CD14-positive monocyte (primary cell): ENCODE measurements at regions of chr20 and their contacts with region 1.

Region 1: GRCh38 chr20:653110-653589 is at the start of gene SRXN1:
- DNase-seq: peak; percentile 93 to 97 (median 93)
- H3K4me3 ChIP-seq: peak within 1 kb of the TSS; percentile 89 to 99 (median 94)
- H3K4me3 Mint-ChIP-seq: peak within 1 kb of the TSS; percentile 93 to 95
- H3K27ac ChIP-seq: peak within 1 kb of the TSS; percentile 62 to 96
- H3K27ac Mint-ChIP-seq: peak within 1 kb of the TSS; percentile 89 to 97 (median 94)
- H3K4me1 ChIP-seq: peaks cover 35 to 49% of the 10 kb centered on the region in 2 donors
- H3K4me1 Mint-ChIP-seq: peaks cover 53% of the 10 kb centered on the region
- H3K27me3 ChIP-seq: no peaks in the 10 kb centered on the region
- H3K27me3 Mint-ChIP-seq: peaks cover 0 to 2% (median 0%) of the 10 kb centered on the region in 3 donors
- CTCF ChIP-seq: peak; percentile 66
- polyA plus RNA-seq, gene SRXN1: 33.5 to 62.4 (median 56.6) TPM

Region 2: DNA sequence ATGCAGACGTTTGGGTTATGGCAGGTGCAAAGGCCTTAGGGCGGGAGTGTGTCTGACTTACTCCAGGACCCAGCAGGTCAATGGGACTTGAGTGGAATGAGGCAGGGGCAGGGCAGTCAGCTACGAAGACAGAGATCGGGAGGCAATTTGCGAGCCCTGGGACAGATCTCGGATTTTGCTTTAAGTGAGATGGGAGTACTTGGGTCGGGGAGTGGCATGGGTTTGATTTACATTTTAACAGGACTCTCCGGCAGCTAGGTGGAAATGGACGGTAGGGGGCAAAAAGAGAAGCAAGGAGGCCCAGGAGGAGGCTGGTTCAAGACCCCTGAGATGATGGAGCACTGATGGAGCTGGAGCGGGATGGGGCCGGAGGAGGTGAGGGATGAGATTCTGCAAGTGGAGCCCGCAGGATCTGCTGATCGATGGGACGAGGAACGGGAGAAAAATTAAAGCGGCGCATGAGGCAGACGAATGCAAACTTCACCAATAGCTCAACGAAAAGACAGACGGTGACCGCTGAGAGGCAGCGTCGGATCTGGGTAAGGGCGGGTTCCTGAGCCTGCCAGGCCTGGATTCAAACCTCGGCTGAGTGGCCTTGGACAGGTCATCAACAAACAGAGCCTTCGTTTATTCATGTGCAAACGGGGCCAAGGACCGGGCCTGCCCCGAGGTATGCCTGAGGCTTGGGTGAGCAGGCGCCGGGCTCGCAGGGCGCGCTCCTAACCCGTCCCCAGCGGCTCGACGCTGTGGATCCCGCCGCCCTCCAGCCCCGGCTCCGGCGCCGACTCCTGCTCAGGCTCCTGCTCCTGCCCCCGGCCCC is 245.8 kb before region 1 on chr20:
- intact Hi-C with region 1: no loop called
- DNase-seq: peak; percentile 52 to 63 (median 54)
- H3K4me3 ChIP-seq: peak overlapping the region; percentile 7 to 99 (median 67)
- H3K4me3 Mint-ChIP-seq: peak overlapping the region; percentile 80 to 91
- H3K27ac ChIP-seq: no peak overlapping the region
- H3K27ac Mint-ChIP-seq: peak overlapping the region; percentile 57 to 88 (median 73)
- H3K4me1 ChIP-seq: peaks cover 21 to 26% of the 10 kb centered on the region in 2 donors
- H3K4me1 Mint-ChIP-seq: peaks cover 30% of the 10 kb centered on the region
- H3K27me3 ChIP-seq: no peaks in the 10 kb centered on the region
- H3K27me3 Mint-ChIP-seq: peaks cover 1 to 4% (median 3%) of the 10 kb centered on the region in 3 donors
- CTCF ChIP-seq: peak; percentile 17

Region 3: GRCh38 chr20:543369-544152 is 109.6 kb before region 1 on chr20 and contains the start of gene CSNK2A1:
- intact Hi-C with region 1: loop called in 1 of 2 experiments (anchors 5 kb)
- DNase-seq: peak; percentile 92 to 96 (median 95)
- H3K4me3 ChIP-seq: peak within 1 kb of the TSS; percentile 86 to 98 (median 97)
- H3K4me3 Mint-ChIP-seq: peak within 1 kb of the TSS; percentile 86 to 92
- H3K27ac ChIP-seq: peak within 1 kb of the TSS; percentile 75 to 94
- H3K27ac Mint-ChIP-seq: peak within 1 kb of the TSS; percentile 55 to 98 (median 97)
- H3K4me1 ChIP-seq: peaks cover 19 to 48% of the 10 kb centered on the region in 2 donors
- H3K4me1 Mint-ChIP-seq: peaks cover 45% of the 10 kb centered on the region
- H3K27me3 ChIP-seq: peaks cover 0 to 5% of the 10 kb centered on the region in 2 donors
- H3K27me3 Mint-ChIP-seq: peaks cover 4 to 8% (median 5%) of the 10 kb centered on the region in 3 donors
- CTCF ChIP-seq: no peak
- polyA plus RNA-seq, gene CSNK2A1: 31.7 to 55.5 (median 35.2) TPM

Region 4: GRCh38 chr20:667391-667964 is 14.3 kb after region 1 on chr20:
- intact Hi-C with region 1: loop called in 1 of 2 experiments (anchors 2 kb)
- DNase-seq: peak; percentile 61 to 77 (median 76)
- H3K4me3 ChIP-seq: no peak overlapping the region
- H3K4me3 Mint-ChIP-seq: no peak overlapping the region
- H3K27ac ChIP-seq: no peak overlapping the region
- H3K27ac Mint-ChIP-seq: peak overlapping the region in 2 of 7 donors; percentile 17 to 58
- H3K4me1 ChIP-seq: peaks cover 7 to 14% of the 10 kb centered on the region in 2 donors
- H3K4me1 Mint-ChIP-seq: peaks cover 19% of the 10 kb centered on the region
- H3K27me3 ChIP-seq: peaks cover 23 to 49% of the 10 kb centered on the region in 2 donors
- H3K27me3 Mint-ChIP-seq: peaks cover 52 to 71% (median 56%) of the 10 kb centered on the region in 3 donors
- CTCF ChIP-seq: peak; percentile 91

Region 5: DNA sequence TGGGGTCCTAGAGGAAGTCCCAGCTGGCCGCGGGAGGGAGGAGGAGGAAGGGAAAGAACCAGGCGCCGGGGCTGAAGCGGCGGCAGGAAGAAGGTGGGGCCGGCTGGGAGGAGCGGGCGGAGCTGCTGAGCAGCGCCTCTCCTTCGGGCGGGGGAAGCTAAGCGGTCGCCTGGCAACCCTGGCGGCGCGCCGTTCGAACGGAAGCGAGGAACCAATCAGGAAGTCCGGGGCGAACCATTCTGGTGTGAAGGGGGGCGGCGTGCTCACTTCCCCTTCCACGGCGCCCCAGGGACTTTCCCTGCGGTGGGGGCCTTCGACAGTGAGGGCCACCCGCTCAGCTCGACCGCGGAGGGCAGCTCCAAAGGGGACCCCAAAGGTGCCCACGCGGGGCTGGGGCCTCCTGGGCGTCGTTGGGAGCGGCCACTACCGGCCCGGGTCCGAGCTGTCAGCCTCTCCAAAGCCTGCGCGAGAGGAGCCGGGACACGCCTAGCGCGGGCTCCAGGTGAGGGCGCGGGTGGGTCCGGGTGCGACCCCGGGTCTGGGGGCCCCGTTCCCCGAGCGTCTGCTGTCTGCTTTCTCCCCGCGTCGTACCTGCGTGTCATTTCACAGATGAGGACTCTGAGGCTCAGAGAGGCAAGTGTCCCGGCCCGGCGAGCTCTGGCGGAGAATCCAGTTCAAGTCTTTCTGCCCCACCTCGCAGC is 180.4 kb after region 1 on chr20 and contains the start of gene FAM110A:
- intact Hi-C with region 1: loop called in 1 of 2 experiments (anchors 10 kb)
- DNase-seq: peak; percentile 97 to 98 (median 98)
- H3K4me3 ChIP-seq: peak within 1 kb of the TSS; percentile 73 to 97 (median 74)
- H3K4me3 Mint-ChIP-seq: peak within 1 kb of the TSS; percentile 93 to 97
- H3K27ac ChIP-seq: peak within 1 kb of the TSS; percentile 72 to 99
- H3K27ac Mint-ChIP-seq: peak within 1 kb of the TSS; percentile 94 to 99 (median 97)
- H3K4me1 ChIP-seq: peaks cover 76 to 83% of the 10 kb centered on the region in 2 donors
- H3K4me1 Mint-ChIP-seq: peaks cover 75% of the 10 kb centered on the region
- H3K27me3 ChIP-seq: no peaks in the 10 kb centered on the region
- H3K27me3 Mint-ChIP-seq: peaks cover 0 to 2% (median 0%) of the 10 kb centered on the region in 3 donors
- CTCF ChIP-seq: no peak
- polyA plus RNA-seq, gene FAM110A: 13.8 to 43.2 (median 27.8) TPM